ENCODE measurements at regions of chr15 and their contacts with region 1.

Region 1: DNA sequence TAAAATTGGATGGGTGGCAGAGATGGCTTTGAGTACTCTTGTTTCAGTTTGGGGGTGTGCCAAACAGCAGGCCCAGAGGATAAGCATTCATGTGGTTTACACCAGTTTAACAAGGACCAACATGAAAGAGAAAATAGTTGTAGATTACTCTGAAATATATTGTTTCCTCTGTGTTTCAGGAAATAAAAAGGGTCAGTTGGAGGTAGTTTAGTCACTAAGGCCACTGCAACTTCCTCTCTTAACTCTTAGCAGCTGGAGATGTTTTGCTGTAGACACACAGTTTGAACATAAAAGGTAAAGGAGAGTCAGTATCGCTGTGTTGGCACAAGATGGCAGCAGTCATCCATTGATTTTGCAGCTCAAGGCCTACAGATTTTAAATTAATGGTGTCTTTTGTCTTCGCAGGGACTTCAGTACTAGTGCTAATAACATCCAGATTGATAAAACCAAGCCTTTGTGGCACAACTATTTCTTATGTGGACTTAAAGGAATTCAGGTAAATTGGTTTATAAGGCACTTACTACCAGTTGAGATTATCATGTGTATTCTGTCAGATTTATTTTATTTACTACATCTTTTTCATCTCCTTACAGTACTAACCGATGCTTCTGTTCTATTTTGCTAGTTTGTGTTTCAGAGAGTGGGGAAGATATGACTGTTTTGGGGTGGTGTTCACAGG is 65.5 kb downstream of the GALK2 start:
- DNase-seq: no peak
- ATAC-seq: peak; percentile 89
- H3K4me3 ChIP-seq: no peak overlapping the region
- H3K27ac ChIP-seq: no peak overlapping the region
- H3K4me1 ChIP-seq: peaks cover 7% of the 10 kb centered on the region
- H3K27me3 ChIP-seq: no peaks in the 10 kb centered on the region
- CTCF ChIP-seq: peak; percentile 75

Region 2: GRCh38 chr15:49313650-49314049 is 78.1 kb after region 1 on chr15:
- intact Hi-C with region 1: no loop called
- DNase-seq: no peak
- ATAC-seq: no peak
- H3K4me3 ChIP-seq: no peak overlapping the region
- H3K27ac ChIP-seq: no peak overlapping the region
- H3K4me1 ChIP-seq: no peaks in the 10 kb centered on the region
- H3K27me3 ChIP-seq: no peaks in the 10 kb centered on the region
- CTCF ChIP-seq: no peak

Region 3: GRCh38 chr15:49415638-49416037 is 180.1 kb after region 1 on chr15:
- intact Hi-C with region 1: loop called (anchors 10 kb)
- DNase-seq: no peak
- ATAC-seq: no peak
- H3K4me3 ChIP-seq: no peak overlapping the region
- H3K27ac ChIP-seq: no peak overlapping the region
- H3K4me1 ChIP-seq: no peaks in the 10 kb centered on the region
- H3K27me3 ChIP-seq: no peaks in the 10 kb centered on the region
- CTCF ChIP-seq: no peak